ENCODE measurements at regions of chr2 and their contacts with region 1.

Region 1: GRCh38 chr2:196987649-196988364 is 61.3 kb upstream of the PGAP1 start:
- DNase-seq: peak; percentile 35
- H3K4me3 Mint-ChIP-seq: peak overlapping the region; percentile 54
- H3K27ac Mint-ChIP-seq: peak overlapping the region; percentile 86
- H3K4me1 Mint-ChIP-seq: peaks cover 57% of the 10 kb centered on the region
- H3K27me3 Mint-ChIP-seq: no peaks in the 10 kb centered on the region

Region 2: GRCh38 chr2:196798980-196799379 is 188.8 kb before region 1 on chr2:
- intact Hi-C with region 1: loop called (anchors 5 kb)
- DNase-seq: no peak
- H3K4me3 Mint-ChIP-seq: peak overlapping the region; percentile 98
- H3K27ac Mint-ChIP-seq: peak overlapping the region; percentile 95
- H3K4me1 Mint-ChIP-seq: peaks cover 28% of the 10 kb centered on the region
- H3K27me3 Mint-ChIP-seq: no peaks in the 10 kb centered on the region

Region 3: GRCh38 chr2:196961889-196962288 is 25.9 kb before region 1 on chr2:
- intact Hi-C with region 1: loop called (anchors 1 kb)
- DNase-seq: no peak
- H3K4me3 Mint-ChIP-seq: no peak overlapping the region
- H3K27ac Mint-ChIP-seq: peak overlapping the region; percentile 72
- H3K4me1 Mint-ChIP-seq: peaks cover 34% of the 10 kb centered on the region
- H3K27me3 Mint-ChIP-seq: no peaks in the 10 kb centered on the region

Region 4: DNA sequence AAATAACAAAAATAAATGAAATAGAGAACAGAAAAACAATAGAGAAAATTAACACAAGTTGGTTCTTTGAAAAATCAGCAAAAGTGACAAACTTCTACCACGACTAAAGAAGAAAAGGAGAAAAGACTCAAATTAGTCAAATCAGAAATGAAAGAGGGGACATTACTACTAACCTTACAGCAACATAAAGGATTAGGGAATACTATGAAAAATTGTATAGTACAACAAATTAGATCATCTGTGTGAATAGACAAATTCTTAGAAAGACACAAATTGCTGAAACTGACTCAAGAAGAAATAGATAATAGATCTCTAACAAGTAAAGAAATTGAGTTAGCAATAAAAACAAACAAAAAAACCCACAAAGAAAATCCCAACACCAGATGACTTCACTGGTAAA is 12.8 kb before region 1 on chr2:
- intact Hi-C with region 1: loop called (anchors 1 kb)
- DNase-seq: no peak
- H3K4me3 Mint-ChIP-seq: no peak overlapping the region
- H3K27ac Mint-ChIP-seq: peak overlapping the region; percentile 10
- H3K4me1 Mint-ChIP-seq: peaks cover 26% of the 10 kb centered on the region
- H3K27me3 Mint-ChIP-seq: no peaks in the 10 kb centered on the region